CD4-positive, alpha-beta T cell (primary cell): ENCODE measurements at regions of chr3 and their contacts with region 1.

Region 1: DNA sequence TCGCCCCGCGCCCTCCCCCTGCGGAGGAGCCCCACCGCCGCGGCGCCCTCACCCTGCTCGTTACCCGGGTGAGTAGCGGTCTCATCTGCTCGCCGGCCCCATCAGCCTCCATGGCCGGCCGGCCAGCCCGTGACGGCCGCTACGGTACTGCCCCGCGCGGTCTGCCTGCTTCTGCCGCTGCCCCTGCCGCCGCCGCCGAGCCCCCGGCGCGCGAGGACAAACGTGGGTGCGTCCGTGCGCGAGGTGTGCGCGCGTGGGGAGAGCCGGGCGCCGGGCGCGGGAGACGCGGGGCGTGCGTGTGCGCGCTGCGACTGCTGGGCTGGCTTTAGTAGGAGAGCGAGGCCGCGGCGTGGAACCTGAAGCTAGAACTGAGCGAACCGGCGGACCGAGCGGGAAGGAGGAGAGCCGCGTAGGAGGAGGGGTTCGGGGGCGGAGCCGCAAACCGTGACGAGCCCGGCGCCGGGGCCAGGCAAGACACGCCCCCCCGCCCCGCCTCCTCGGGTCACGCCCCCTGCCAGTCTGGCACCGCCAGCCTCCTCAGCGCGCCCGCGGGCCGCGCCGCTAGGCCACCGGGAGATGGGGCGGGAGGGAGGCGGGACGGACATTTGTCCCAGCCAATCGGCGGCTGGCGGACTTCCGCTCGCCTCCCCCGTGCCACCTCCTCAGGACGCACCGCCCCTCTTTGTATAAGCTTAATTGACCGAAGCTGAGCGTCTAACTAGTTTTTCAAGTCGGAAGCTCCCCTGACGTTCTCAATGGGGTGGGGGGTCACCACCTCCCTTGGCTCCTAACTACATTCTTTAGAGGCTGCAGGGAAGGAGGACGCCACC is at the start of gene SLC4A7:
- DNase-seq: peak; percentile 95 to 99 (median 98)
- ATAC-seq: peak; percentile 83
- H3K4me3 ChIP-seq: peak within 1 kb of the TSS; percentile 96
- H3K4me3 Mint-ChIP-seq: peak within 1 kb of the TSS; percentile 99
- H3K27ac ChIP-seq: peak within 1 kb of the TSS; percentile 67 to 72
- H3K27ac Mint-ChIP-seq: peak within 1 kb of the TSS; percentile 97
- H3K4me1 ChIP-seq: peaks cover 29% of the 10 kb centered on the region
- H3K4me1 Mint-ChIP-seq: peaks cover 41% of the 10 kb centered on the region
- H3K27me3 ChIP-seq: no peaks in the 10 kb centered on the region
- H3K27me3 Mint-ChIP-seq: no peaks in the 10 kb centered on the region
- CTCF ChIP-seq: no peak
- total RNA-seq, gene SLC4A7: 37.0 to 38.3 TPM

Region 2: GRCh38 chr3:25664810-25665314 is 1819.4 kb before region 1 on chr3 and contains the start of gene TOP2B:
- CTCF ChIA-PET with region 1: no interaction called
- POLR2A ChIA-PET with region 1: no interaction called
- intact Hi-C with region 1: loop called in 1 of 2 experiments (anchors 5 kb)
- DNase-seq: peak; percentile 87 to 97 (median 92)
- ATAC-seq: peak; percentile 89
- H3K4me3 ChIP-seq: peak within 1 kb of the TSS; percentile 94
- H3K4me3 Mint-ChIP-seq: peak within 1 kb of the TSS; percentile 98
- H3K27ac ChIP-seq: peak within 1 kb of the TSS; percentile 92 to 93
- H3K27ac Mint-ChIP-seq: peak within 1 kb of the TSS; percentile 98
- H3K4me1 ChIP-seq: peaks cover 13% of the 10 kb centered on the region
- H3K4me1 Mint-ChIP-seq: peaks cover 49% of the 10 kb centered on the region
- H3K27me3 ChIP-seq: no peaks in the 10 kb centered on the region
- H3K27me3 Mint-ChIP-seq: no peaks in the 10 kb centered on the region
- CTCF ChIP-seq: no peak
- total RNA-seq, gene TOP2B: 79.7 to 80.4 TPM

Region 3: DNA sequence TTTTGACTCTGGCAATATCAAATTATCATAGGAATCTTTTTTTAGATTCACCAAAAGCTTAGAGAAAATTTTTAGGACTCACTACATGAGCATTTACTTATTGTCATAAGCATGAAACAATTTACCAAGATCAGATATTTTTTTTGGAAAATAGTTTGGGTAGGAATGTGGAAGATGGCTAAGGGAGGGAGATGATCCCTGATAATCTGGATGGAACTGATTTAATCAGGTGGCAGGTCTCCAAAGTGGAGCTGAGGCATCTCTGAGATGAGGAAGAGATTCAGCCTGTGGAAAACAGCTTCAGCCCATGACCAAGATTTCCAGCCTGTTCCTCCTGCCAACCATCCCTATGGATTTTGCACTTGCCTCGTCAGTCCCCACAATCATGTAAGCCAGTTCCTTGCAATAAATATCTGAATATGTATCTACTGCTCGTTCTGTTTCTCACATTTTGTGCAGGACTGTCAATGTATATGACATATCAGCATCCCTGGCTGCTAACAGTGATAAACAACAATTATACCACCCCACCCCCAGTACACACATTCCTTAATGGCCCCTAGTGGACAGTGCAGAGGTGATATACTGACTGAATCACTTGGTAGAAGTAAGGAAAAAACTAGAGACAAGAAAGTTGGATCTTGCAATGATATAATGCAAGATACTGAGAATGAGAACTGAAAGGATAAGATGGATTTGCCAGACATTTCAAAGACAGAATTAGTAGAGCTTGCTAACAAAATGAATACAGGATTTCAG is 298.8 kb before region 1 on chr3:
- CTCF ChIA-PET with region 1: no interaction called
- POLR2A ChIA-PET with region 1: no interaction called
- intact Hi-C with region 1: no loop called
- DNase-seq: no peak
- ATAC-seq: no peak
- H3K4me3 ChIP-seq: no peak overlapping the region
- H3K4me3 Mint-ChIP-seq: no peak overlapping the region
- H3K27ac ChIP-seq: no peak overlapping the region
- H3K27ac Mint-ChIP-seq: no peak overlapping the region
- H3K4me1 ChIP-seq: no peaks in the 10 kb centered on the region
- H3K4me1 Mint-ChIP-seq: no peaks in the 10 kb centered on the region
- H3K27me3 ChIP-seq: no peaks in the 10 kb centered on the region
- H3K27me3 Mint-ChIP-seq: no peaks in the 10 kb centered on the region
- CTCF ChIP-seq: no peak

Region 4: DNA sequence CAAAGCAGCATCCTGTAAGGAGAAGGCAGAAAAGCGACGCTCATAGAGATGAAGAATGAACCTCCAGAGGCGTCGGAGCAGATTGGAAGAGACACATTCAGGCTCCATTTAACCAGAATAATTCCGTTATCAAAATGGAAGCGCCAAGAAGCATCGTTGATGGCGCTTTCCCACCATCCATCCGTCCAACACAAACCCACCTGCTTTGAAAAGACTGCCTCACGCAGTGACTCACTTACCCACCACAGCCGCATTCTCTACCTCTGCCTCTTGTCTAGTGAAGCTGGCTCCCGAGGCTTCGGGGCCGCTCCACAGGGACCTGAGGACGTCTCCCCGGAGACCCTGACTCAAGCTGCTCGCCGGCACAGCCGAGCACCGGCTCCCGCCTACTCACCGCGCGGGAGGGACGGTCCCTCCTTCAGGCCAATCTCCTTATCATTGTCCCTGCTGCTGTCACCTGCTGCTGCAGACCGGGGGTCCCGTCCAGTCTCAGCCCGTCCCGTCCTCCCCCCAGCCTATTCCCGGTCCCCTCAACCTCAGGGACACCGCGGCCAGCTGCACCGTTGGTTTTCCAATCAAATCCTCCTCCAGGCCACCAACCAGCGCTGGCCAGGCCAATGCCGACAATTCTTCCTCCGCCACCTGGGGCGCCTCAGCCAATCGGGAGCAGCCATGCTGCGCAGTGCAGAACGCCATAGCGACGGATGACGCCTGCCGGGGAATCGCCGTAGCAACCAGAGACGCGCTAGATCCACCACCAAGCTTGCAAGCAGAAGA is 115.2 kb before region 1 on chr3 and contains the start of gene NEK10:
- CTCF ChIA-PET with region 1: no interaction called
- POLR2A ChIA-PET with region 1: interaction called, 10 read pairs
- intact Hi-C with region 1: loop called (anchors 5 kb)
- DNase-seq: peak; percentile 84 to 96 (median 91)
- ATAC-seq: peak; percentile 96
- H3K4me3 ChIP-seq: peak within 1 kb of the TSS; percentile 73
- H3K4me3 Mint-ChIP-seq: peak within 1 kb of the TSS; percentile 91
- H3K27ac ChIP-seq: no peak within 1 kb of the TSS
- H3K27ac Mint-ChIP-seq: peak within 1 kb of the TSS; percentile 59
- H3K4me1 ChIP-seq: peaks cover 9% of the 10 kb centered on the region
- H3K4me1 Mint-ChIP-seq: peaks cover 15% of the 10 kb centered on the region
- H3K27me3 ChIP-seq: no peaks in the 10 kb centered on the region
- H3K27me3 Mint-ChIP-seq: no peaks in the 10 kb centered on the region
- CTCF ChIP-seq: peak; percentile 13
- total RNA-seq, gene NEK10: 0.61 to 0.77 TPM

Region 5: GRCh38 chr3:27500051-27500450 is 15.8 kb after region 1 on chr3:
- CTCF ChIA-PET with region 1: no interaction called
- POLR2A ChIA-PET with region 1: interaction called, 11 read pairs
- intact Hi-C with region 1: no loop called
- DNase-seq: no peak
- ATAC-seq: no peak
- H3K4me3 ChIP-seq: no peak overlapping the region
- H3K4me3 Mint-ChIP-seq: no peak overlapping the region
- H3K27ac ChIP-seq: no peak overlapping the region
- H3K27ac Mint-ChIP-seq: no peak overlapping the region
- H3K4me1 ChIP-seq: no peaks in the 10 kb centered on the region
- H3K4me1 Mint-ChIP-seq: peaks cover 9% of the 10 kb centered on the region
- H3K27me3 ChIP-seq: no peaks in the 10 kb centered on the region
- H3K27me3 Mint-ChIP-seq: no peaks in the 10 kb centered on the region
- CTCF ChIP-seq: no peak

Region 6: GRCh38 chr3:27659279-27660021 is 175.2 kb after region 1 on chr3:
- CTCF ChIA-PET with region 1: no interaction called
- POLR2A ChIA-PET with region 1: no interaction called
- intact Hi-C with region 1: loop called in 1 of 2 experiments (anchors 10 kb)
- DNase-seq: peak; percentile 17 to 68 (median 34)
- ATAC-seq: peak; percentile 58
- H3K4me3 ChIP-seq: no peak overlapping the region
- H3K4me3 Mint-ChIP-seq: no peak overlapping the region
- H3K27ac ChIP-seq: no peak overlapping the region
- H3K27ac Mint-ChIP-seq: no peak overlapping the region
- H3K4me1 ChIP-seq: peaks cover 3% of the 10 kb centered on the region
- H3K4me1 Mint-ChIP-seq: no peaks in the 10 kb centered on the region
- H3K27me3 ChIP-seq: no peaks in the 10 kb centered on the region
- H3K27me3 Mint-ChIP-seq: no peaks in the 10 kb centered on the region
- CTCF ChIP-seq: peak; percentile 96

Region 7: DNA sequence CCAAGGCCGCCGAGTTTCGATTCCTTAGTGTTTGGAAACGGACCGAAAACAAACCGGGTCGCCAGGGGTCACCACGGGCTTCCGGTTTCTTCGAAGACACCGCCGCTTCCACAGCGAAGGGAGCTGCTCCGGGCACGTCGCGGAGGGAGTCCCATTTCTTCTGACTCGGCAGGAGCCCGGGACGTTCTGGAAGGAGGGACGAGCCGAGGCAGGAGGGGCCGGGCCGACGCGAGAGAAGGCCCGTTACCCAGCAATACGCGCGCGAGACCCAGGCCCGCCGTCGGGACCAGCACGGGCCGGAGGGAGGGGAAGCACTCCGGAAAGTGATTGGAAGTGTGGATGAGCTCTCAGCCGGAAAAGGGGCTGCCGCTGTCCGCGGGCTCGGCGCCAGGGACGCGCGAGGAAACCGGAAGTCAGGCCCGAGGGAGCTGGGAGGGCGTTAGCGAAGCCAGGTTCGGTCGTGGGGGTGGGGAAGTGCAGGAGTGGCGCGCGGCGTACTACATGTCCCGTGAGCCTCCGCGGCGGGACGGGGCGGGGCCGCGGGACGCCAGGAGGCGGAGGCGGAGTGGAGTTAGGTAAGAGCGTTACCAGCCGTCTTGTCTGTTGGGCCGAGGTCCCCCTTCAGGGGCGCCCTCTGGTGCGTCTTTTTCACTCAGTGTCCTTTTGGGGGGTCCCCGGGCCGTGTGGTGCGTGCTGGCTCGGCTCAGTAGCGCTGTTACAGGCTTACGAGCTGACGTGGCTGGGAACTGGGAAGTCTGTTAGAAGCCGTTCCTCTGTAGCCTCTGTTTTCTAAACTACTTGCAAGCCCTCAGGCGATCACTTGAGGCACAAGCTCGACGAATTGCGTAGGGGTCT is 864.6 kb after region 1 on chr3 and contains the starts of genes AZI2 and ZCWPW2:
- CTCF ChIA-PET with region 1: no interaction called
- POLR2A ChIA-PET with region 1: interaction called, 16 read pairs
- intact Hi-C with region 1: loop called (anchors 2 kb)
- DNase-seq: peak; percentile 85 to 96 (median 90)
- ATAC-seq: peak; percentile 87
- H3K4me3 ChIP-seq: peak within 1 kb of the TSS; percentile 96
- H3K4me3 Mint-ChIP-seq: peak within 1 kb of the TSS; percentile 100
- H3K27ac ChIP-seq: peak within 1 kb of the TSS; percentile 91 to 99
- H3K27ac Mint-ChIP-seq: peak within 1 kb of the TSS; percentile 99
- H3K4me1 ChIP-seq: peaks cover 17% of the 10 kb centered on the region
- H3K4me1 Mint-ChIP-seq: peaks cover 55% of the 10 kb centered on the region
- H3K27me3 ChIP-seq: no peaks in the 10 kb centered on the region
- H3K27me3 Mint-ChIP-seq: no peaks in the 10 kb centered on the region
- CTCF ChIP-seq: peak; percentile 18
- total RNA-seq, gene AZI2: 27.4 to 31.5 TPM
- total RNA-seq, gene ZCWPW2: 0.27 to 0.28 TPM